ENCODE measurements at regions of chr4 and their contacts with region 1.

Region 1: GRCh38 chr4:89434364-89434988 is 126.9 kb upstream of the GPRIN3 start:
- DNase-seq: peak in 2 of 9 experiments; percentile 57 to 70
- ATAC-seq: peak; percentile 67
- H3K4me3 ChIP-seq: no peak overlapping the region
- H3K4me3 Mint-ChIP-seq: no peak overlapping the region
- H3K27ac ChIP-seq: no peak overlapping the region
- H3K27ac Mint-ChIP-seq: no peak overlapping the region
- H3K4me1 ChIP-seq: peaks cover 6% of the 10 kb centered on the region
- H3K4me1 Mint-ChIP-seq: peaks cover 7% of the 10 kb centered on the region
- H3K27me3 ChIP-seq: no peaks in the 10 kb centered on the region
- H3K27me3 Mint-ChIP-seq: peaks cover 4% of the 10 kb centered on the region
- CTCF ChIP-seq: peak; percentile 78

Region 2: GRCh38 chr4:89158884-89159503 is 275.5 kb before region 1 on chr4:
- CTCF ChIA-PET with region 1: interaction called, 5 read pairs
- POLR2A ChIA-PET with region 1: no interaction called
- intact Hi-C with region 1: loop called (anchors 1 to 2 kb)
- DNase-seq: peak in 2 of 9 experiments; percentile 40 to 57
- ATAC-seq: peak; percentile 51
- H3K4me3 ChIP-seq: no peak overlapping the region
- H3K4me3 Mint-ChIP-seq: no peak overlapping the region
- H3K27ac ChIP-seq: no peak overlapping the region
- H3K27ac Mint-ChIP-seq: no peak overlapping the region
- H3K4me1 ChIP-seq: no peaks in the 10 kb centered on the region
- H3K4me1 Mint-ChIP-seq: no peaks in the 10 kb centered on the region
- H3K27me3 ChIP-seq: no peaks in the 10 kb centered on the region
- H3K27me3 Mint-ChIP-seq: peaks cover 6% of the 10 kb centered on the region
- CTCF ChIP-seq: peak; percentile 95

Region 3: GRCh38 chr4:89486042-89486441 is 51.6 kb after region 1 on chr4:
- CTCF ChIA-PET with region 1: no interaction called
- POLR2A ChIA-PET with region 1: no interaction called
- intact Hi-C with region 1: no loop called
- DNase-seq: no peak
- ATAC-seq: no peak
- H3K4me3 ChIP-seq: no peak overlapping the region
- H3K4me3 Mint-ChIP-seq: no peak overlapping the region
- H3K27ac ChIP-seq: no peak overlapping the region
- H3K27ac Mint-ChIP-seq: no peak overlapping the region
- H3K4me1 ChIP-seq: no peaks in the 10 kb centered on the region
- H3K4me1 Mint-ChIP-seq: no peaks in the 10 kb centered on the region
- H3K27me3 ChIP-seq: no peaks in the 10 kb centered on the region
- H3K27me3 Mint-ChIP-seq: no peaks in the 10 kb centered on the region
- CTCF ChIP-seq: no peak

Measured in CD8-positive, alpha-beta T cell (primary cell).